ENCODE measurements at regions of chr12 and their contacts with region 1.

Region 1: GRCh38 chr12:22069856-22070565 is 24.0 kb downstream of the CMAS start:
- DNase-seq: no peak
- ATAC-seq: no peak
- H3K4me3 Mint-ChIP-seq: no peak overlapping the region
- H3K27ac Mint-ChIP-seq: no peak overlapping the region
- H3K4me1 Mint-ChIP-seq: peaks cover 7% of the 10 kb centered on the region
- H3K27me3 Mint-ChIP-seq: peaks cover 3% of the 10 kb centered on the region

Region 2: GRCh38 chr12:21925296-21925913 is 144.6 kb before region 1 on chr12:
- CTCF ChIA-PET with region 1: no interaction called
- POLR2A ChIA-PET with region 1: no interaction called
- intact Hi-C with region 1: no loop called
- DNase-seq: no peak
- ATAC-seq: no peak
- H3K4me3 Mint-ChIP-seq: no peak overlapping the region
- H3K27ac Mint-ChIP-seq: no peak overlapping the region
- H3K4me1 Mint-ChIP-seq: no peaks in the 10 kb centered on the region
- H3K27me3 Mint-ChIP-seq: peaks cover 26% of the 10 kb centered on the region

Region 3: GRCh38 chr12:21989819-21990412 is 80.1 kb before region 1 on chr12:
- CTCF ChIA-PET with region 1: no interaction called
- POLR2A ChIA-PET with region 1: no interaction called
- intact Hi-C with region 1: no loop called
- DNase-seq: no peak
- ATAC-seq: no peak
- H3K4me3 Mint-ChIP-seq: no peak overlapping the region
- H3K27ac Mint-ChIP-seq: no peak overlapping the region
- H3K4me1 Mint-ChIP-seq: peaks cover 9% of the 10 kb centered on the region
- H3K27me3 Mint-ChIP-seq: peaks cover 7% of the 10 kb centered on the region

Region 4: GRCh38 chr12:22083167-22083566 is 13.2 kb after region 1 on chr12:
- CTCF ChIA-PET with region 1: interaction called, 10 read pairs
- POLR2A ChIA-PET with region 1: no interaction called
- intact Hi-C with region 1: no loop called
- DNase-seq: peak; percentile 16
- ATAC-seq: no peak
- H3K4me3 Mint-ChIP-seq: no peak overlapping the region
- H3K27ac Mint-ChIP-seq: no peak overlapping the region
- H3K4me1 Mint-ChIP-seq: no peaks in the 10 kb centered on the region
- H3K27me3 Mint-ChIP-seq: no peaks in the 10 kb centered on the region